Pancreas (tissue), 10 donors: ENCODE measurements at regions of chr4 and their contacts with region 1.

Region 1: DNA sequence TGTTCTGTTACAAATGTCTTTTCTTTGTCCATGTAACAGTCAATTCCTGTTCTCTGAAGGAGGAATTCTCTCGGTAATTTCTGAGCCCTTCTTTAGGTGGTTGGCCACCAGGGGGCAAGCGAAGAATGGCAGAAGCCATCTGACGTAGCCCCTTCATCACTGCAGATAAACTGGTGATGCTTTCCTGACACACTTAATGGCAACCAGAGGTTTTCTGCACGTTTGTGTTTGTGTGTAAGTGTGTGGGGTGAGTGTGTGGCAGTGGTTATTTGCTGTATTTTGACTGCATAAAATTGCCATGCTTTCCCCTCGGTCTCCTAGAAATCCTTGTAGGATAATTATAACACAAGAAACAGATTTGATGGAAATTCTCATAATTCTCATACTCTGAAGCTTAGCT is 64.8 kb upstream of the STOX2 start:
- DNase-seq: peak; percentile 50 to 87 (median 68)
- ATAC-seq: peak; percentile 78 to 97 (median 95)
- H3K4me3 ChIP-seq: no peak overlapping the region
- H3K27ac ChIP-seq: no peak overlapping the region
- H3K4me1 ChIP-seq: no peaks in the 10 kb centered on the region
- H3K27me3 ChIP-seq: no peaks in the 10 kb centered on the region
- CTCF ChIP-seq: peak; percentile 60 to 82 (median 70)

Region 2: DNA sequence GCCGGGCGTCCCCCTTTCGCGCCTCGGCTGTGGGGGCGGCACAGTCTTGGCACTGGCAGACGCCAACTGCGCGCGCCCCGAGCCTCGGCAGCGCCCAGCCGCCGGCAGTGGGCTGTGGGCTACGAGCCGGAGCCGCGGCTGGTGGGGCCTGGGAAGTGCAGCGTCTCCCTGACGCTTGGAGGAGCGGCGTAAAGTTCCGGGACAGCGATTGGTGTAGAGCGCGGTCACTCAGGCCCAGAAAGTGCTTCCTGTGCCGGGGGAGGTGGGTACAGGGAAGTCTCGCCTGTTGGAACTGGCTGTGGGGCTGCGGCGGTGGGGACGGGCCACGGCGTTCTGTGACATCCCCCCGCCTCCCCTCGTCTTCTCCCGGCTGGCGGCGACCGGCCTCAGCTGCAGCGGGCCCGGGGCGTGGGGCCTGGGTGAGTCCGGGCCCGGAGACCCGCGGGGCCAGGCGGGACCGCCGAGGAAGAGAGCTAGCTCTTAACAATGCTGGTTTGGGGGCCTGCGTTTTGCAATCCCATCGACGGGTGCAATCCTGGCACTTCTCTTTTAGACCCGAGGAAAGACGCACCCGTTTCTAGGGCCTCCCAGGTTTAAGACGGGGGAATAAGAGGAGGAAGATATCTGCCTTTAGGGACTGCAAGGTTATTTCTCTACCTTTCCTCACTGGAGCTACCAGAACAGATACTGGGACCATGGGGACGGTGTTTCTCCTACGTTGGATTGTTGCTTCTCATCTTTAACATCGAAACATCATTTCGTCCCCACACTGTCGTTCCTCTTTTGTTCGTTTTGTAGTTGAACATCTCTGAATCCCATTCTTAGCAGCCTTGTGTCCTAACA is 181.1 kb before region 1 on chr4 and contains the starts of genes RWDD4 and TRAPPC11:
- intact Hi-C with region 1: no loop called
- DNase-seq: peak; percentile 93 to 98 (median 98)
- ATAC-seq: peak; percentile 99 to 100 (median 99)
- H3K4me3 ChIP-seq: peak within 1 kb of the TSS; percentile 69 to 98 (median 90)
- H3K27ac ChIP-seq: peak within 1 kb of the TSS; percentile 71 to 92 (median 88)
- H3K4me1 ChIP-seq: peaks cover 11 to 18% (median 14%) of the 10 kb centered on the region in 3 donors
- H3K27me3 ChIP-seq: no peaks in the 10 kb centered on the region
- CTCF ChIP-seq: peak in 1 of 4 donors; percentile 30
- total RNA-seq, gene RWDD4: 9.1 to 14.0 (median 12.8) TPM
- total RNA-seq, gene TRAPPC11: 15.0 to 19.2 (median 16.3) TPM

Region 3: GRCh38 chr4:183936574-183937345 is 96.4 kb after region 1 on chr4:
- intact Hi-C with region 1: no loop called
- DNase-seq: no peak
- ATAC-seq: no peak
- H3K4me3 ChIP-seq: no peak overlapping the region
- H3K27ac ChIP-seq: no peak overlapping the region
- H3K4me1 ChIP-seq: no peaks in the 10 kb centered on the region
- H3K27me3 ChIP-seq: no peaks in the 10 kb centered on the region
- CTCF ChIP-seq: no peak

Region 4: DNA sequence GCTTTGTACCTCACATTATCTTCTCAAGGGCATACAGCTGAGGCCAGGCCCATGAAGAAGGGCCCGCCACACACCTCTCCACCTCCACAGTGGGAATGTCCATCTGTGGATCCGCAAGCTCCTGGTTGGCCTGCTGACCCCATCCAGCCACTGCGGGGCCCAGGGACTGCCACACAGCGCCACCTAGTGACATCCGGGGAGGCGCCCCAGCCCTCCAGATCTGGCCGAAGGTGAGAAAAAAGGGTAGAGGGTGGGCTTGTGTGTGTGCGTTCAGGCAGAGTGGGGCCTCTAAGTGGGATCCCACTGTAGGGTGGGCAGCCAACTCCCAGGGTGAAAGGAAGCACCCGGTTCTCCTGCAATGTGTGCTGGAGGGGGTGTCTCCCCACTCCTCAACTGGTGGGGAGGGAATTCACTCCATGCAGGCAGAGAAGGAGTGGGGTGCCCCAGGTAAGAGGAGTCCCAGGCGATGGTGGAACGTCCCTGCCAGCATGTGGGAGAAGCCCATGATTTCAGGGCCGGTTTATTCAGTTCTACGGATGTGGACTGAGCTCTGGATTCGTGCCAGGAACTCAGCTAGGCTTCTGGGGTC is 260.1 kb after region 1 on chr4:
- intact Hi-C with region 1: loop called in 1 of 3 experiments (anchors 5 kb)
- DNase-seq: peak; percentile 23 to 85 (median 63)
- ATAC-seq: peak in 3 of 4 donors; percentile 40 to 73 (median 68)
- H3K4me3 ChIP-seq: no peak overlapping the region
- H3K27ac ChIP-seq: no peak overlapping the region
- H3K4me1 ChIP-seq: peaks cover 20 to 28% (median 28%) of the 10 kb centered on the region in 3 donors
- H3K27me3 ChIP-seq: no peaks in the 10 kb centered on the region
- CTCF ChIP-seq: peak; percentile 44 to 77 (median 62)

Region 5: GRCh38 chr4:184156163-184156920 is 316.0 kb after region 1 on chr4:
- intact Hi-C with region 1: loop called in 2 of 3 experiments (anchors 5 to 10 kb)
- DNase-seq: no peak
- ATAC-seq: no peak
- H3K4me3 ChIP-seq: no peak overlapping the region
- H3K27ac ChIP-seq: no peak overlapping the region
- H3K4me1 ChIP-seq: no peaks in the 10 kb centered on the region
- H3K27me3 ChIP-seq: no peaks in the 10 kb centered on the region
- CTCF ChIP-seq: no peak

Region 6: DNA sequence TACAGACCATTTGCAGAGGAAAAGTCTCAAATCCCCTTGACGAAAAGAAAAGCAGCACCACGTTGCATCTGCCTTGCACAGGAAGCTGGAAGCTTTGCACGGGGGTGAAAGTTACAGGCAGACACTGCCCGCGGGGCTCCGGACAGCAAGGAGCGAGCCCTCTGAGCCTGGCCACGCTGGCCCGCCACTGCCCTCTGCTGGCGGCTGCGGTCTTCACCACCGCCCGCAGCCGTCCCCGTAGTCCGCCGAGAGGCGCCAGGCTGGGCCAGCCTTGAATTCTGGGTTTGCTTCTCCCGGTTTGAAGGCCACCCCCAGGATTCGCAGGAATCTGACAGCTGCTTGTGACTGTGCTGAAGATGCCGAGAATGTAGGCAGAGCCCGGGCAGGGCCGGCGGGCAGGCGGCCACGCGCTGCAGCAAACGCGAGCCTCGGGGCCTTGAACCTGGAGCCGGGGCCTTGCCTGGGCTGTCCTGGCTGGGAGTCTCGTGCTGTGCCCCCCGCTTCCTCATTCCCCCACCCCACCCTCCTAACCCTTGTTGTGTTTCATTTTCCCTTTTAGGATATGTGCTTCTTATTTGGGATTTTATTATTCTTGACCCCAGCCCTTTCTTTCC is 328.2 kb after region 1 on chr4:
- intact Hi-C with region 1: loop called in 2 of 3 experiments (anchors 2 to 5 kb)
- DNase-seq: peak; percentile 47 to 94 (median 80)
- ATAC-seq: peak; percentile 96 to 99 (median 98)
- H3K4me3 ChIP-seq: no peak overlapping the region
- H3K27ac ChIP-seq: no peak overlapping the region
- H3K4me1 ChIP-seq: no peaks in the 10 kb centered on the region
- H3K27me3 ChIP-seq: no peaks in the 10 kb centered on the region
- CTCF ChIP-seq: peak; percentile 86 to 97 (median 95)